ENCODE measurements at regions of chr5 and their contacts with region 1.

Region 1: DNA sequence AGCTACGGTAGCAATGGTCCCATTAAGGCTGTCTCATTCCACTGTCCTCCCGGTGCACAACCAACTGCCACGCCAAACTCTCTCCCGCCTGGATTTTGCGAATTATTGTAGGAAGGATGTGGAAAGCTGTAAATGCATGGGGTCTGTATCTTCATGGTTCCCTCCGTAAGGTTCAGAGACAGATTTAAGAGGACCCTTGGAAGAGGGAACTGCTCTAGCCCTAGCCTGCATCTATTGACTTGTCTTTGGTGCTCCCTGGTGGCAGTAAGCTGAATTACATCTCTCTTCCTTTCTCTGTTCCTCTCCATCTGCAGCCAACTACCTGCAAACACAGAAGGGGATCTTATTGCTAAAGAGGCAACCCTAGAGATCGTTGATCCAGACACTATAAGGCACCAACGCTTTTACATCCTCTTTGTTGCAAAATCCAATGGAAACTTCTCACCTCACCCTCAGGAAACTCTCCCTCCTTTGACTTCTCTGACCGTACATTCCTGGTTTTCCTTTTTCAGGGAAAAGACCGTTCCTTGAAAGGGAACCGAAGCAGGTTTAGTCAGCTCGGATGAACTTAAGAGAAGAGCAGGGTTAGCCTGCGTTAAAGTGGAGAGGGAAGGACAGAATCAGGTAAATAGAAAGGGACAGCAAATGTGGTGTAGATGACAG is 11.9 kb downstream of the CAPSL start:
- DNase-seq: no peak
- ATAC-seq: peak; percentile 76

Region 2: DNA sequence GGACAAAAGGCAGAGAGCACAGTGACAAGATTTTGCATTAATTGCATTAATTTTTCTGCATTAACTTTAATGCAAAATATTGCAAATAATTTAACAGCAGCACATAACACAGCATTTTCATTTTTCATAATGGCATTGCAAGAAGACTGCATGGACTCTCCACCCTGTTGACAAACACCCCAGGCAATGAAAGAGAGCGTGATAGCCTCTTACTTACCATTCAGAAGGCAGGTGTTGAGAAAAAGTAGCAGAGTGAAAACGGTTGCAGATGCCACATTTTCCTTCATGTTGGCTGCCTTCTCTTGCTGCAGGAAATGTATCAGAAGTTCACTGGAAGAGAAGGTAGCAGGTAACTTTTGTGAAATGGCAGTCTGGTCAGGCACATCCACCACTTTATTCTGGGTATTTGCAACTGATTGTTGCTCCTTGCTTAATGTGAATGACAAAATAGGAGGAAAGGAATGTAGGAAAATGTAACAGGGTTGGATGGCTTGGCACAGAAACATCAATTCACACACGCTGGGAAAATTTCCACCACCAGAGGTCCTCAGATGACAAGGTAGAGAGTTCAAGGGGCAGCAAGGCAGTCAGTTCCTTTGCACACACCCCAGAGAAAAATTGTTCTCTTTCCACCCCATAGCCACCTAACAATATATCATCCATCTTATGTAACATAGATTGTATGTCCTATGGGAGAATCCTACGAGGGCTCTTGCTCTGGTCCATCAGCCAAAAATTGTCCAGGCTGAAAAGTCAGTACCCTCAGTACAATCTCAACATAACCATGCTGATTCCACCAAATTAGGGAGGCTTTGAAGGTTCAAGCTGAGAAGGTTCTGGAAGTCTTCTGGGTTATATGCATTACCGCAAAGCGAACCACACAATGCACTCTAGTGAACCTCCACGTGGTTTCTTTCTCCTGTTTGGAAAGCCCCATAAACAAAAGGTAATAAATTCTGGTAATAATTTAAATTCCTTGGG is 836.9 kb before region 1 on chr5:
- intact Hi-C with region 1: loop called (anchors 10 kb)
- DNase-seq: peak; percentile 77
- ATAC-seq: peak; percentile 84

Region 3: GRCh38 chr5:35777358-35778087 is 149.0 kb before region 1 on chr5:
- intact Hi-C with region 1: loop called (anchors 5 kb)
- DNase-seq: peak; percentile 83
- ATAC-seq: peak; percentile 42